ENCODE measurements at regions of chr21 and their contacts with region 1.

Region 1: DNA sequence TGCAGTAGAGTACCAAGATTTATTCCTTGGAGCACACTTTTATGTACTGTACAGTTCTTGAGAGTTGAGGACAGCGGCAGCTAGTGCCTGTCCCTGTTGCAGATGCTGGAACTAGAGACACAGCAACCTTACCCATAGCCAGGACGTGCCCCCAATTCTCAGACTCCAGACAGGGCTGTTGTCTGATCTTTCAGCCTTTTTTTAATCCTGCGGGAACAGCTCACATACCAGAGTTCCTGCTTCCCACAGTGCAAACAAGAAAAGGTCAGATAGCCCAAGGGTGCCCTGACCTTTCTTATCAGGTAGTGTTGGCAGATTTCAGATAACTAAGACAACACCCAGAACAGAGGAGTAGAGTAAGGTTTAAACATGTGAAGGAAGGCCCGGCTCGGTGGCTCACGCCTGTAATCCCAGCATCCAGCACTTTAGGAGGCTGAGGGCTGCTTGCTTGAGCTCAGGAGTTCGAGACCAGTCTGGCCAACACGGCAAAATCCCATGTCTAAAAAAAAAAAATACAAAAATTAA is 78.5 kb downstream of the DOP1B start:
- DNase-seq: no peak
- H3K4me3 ChIP-seq: no peak overlapping the region
- H3K27ac ChIP-seq: no peak overlapping the region
- H3K4me1 ChIP-seq: no peaks in the 10 kb centered on the region
- H3K27me3 ChIP-seq: no peaks in the 10 kb centered on the region
- CTCF ChIP-seq: no peak

Region 2: DNA sequence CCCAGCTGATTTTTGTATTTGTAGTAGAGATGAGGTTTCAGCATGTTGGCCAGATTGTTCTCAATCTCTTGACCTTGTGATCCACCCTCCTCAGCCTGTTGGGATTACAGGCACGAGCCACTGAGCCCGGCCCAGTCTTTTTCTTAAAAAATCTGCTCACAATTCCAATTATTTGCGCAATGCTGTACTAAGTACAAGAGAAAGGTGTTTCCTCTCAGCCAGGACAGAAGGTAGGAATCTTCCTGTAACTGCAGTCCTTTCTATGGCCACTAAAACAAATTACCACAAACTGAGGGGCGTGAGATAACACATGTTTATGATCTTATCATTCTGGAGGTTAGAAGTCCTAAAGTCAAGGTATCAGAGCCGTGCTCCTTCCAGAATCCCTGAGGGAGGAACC is 107.1 kb before region 1 on chr21:
- CTCF ChIA-PET with region 1: no interaction called
- dilution Hi-C with region 1: no loop called
- in situ Hi-C with region 1: no loop called
- intact Hi-C with region 1: no loop called
- DNase-seq: no peak
- H3K4me3 ChIP-seq: no peak overlapping the region
- H3K27ac ChIP-seq: no peak overlapping the region
- H3K4me1 ChIP-seq: peaks cover 13% of the 10 kb centered on the region
- H3K27me3 ChIP-seq: no peaks in the 10 kb centered on the region
- CTCF ChIP-seq: no peak

Region 3: GRCh38 chr21:36169436-36170128 is 65.5 kb before region 1 on chr21:
- CTCF ChIA-PET with region 1: no interaction called
- dilution Hi-C with region 1: no loop called
- in situ Hi-C with region 1: loop called in 1 of 2 experiments (anchors 10 kb)
- intact Hi-C with region 1: no loop called
- DNase-seq: no peak
- H3K4me3 ChIP-seq: no peak overlapping the region
- H3K27ac ChIP-seq: no peak overlapping the region
- H3K4me1 ChIP-seq: no peaks in the 10 kb centered on the region
- H3K27me3 ChIP-seq: no peaks in the 10 kb centered on the region
- CTCF ChIP-seq: no peak

Measured in mammary epithelial cell (primary cell).